ENCODE measurements at regions of chr2 and their contacts with region 1.

Region 1: DNA sequence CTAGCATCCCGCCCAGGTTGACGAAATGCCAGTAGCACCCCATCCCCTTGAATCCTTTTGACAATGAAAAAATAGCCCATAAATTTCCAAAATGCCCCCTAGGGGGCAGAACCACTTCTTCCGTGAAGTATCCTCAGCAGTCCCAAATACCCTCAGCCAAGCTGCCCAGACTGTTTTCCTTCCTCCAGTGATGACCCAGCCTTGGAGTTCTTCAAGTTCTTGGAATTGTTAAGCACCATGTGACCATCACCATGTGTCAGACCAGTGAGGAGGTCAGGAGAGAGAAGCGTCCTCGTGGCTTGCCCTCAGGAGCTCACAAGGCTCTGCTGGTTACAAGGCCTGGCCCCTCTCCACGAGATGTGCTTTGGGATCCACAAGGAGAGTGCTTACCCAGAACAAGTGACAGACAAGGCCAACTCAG is 1.4 kb upstream of the SLC23A3 start:
- DNase-seq: peak; percentile 58
- H3K4me3 ChIP-seq: no peak overlapping the region
- H3K27ac ChIP-seq: peak overlapping the region; percentile 12
- H3K4me1 ChIP-seq: peaks cover 8% of the 10 kb centered on the region
- H3K27me3 ChIP-seq: no peaks in the 10 kb centered on the region
- CTCF ChIP-seq: peak; percentile 71

Region 2: DNA sequence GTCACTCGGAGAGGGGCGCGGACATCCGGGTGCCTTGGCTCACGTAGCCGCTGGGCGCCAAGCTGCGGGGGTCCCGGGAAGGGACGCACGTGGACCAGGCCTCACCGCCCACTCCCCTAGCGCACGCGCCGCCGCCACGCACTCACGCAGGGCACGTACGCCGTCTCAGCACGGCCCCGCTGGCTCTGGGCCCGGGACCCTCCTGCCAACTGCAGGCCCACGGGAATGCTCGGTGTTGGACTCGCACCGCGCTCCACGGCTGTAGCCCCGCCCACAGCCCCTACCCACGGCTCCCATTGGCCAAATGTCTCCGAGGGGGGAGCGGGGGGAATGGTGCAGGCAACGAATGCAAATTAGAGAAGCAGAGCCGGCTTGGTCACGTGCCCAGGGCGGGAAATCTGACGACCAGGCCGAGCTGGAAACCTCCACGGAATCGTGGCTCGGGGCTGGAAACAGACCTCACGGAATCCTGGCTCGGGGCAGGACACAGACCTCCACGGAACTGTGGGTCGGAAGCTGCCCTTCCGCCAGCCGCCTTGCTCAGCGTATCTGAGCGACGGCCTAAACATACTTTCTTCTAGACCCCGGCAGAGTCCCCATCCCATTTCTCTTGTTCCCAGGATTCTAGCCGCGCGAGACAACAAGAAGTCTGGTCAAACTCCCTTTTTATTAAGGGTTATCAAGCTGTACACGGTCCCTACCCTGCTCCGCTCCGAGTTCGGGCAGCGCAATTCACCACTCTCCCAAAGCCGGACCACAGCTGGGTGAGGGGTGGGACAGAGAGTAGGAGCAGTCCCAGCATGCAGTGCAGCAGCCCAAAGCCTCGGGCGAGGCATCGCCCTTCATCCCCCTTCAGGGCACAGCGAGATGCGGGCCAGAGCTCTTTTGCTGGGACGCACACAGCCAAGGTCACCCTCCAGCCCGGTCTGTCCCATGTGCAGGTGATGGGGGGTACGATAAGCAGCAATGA is 47.8 kb after region 1 on chr2 and contains the start of gene ABCB6:
- intact Hi-C with region 1: loop called (anchors 5 kb)
- DNase-seq: peak; percentile 97
- H3K4me3 ChIP-seq: peak within 1 kb of the TSS; percentile 65
- H3K27ac ChIP-seq: peak within 1 kb of the TSS; percentile 93
- H3K4me1 ChIP-seq: peaks cover 6% of the 10 kb centered on the region
- H3K27me3 ChIP-seq: no peaks in the 10 kb centered on the region
- CTCF ChIP-seq: no peak
- total RNA-seq, gene ABCB6: 16.9 to 27.1 TPM

Measured in colonic mucosa (tissue), 4 donors.